Heart left ventricle (tissue), 16 donors: ENCODE measurements at regions of chr15 and their contacts with region 1.

Region 1: GRCh38 chr15:70770863-70771262 is 7.5 kb upstream of the UACA start:
- DNase-seq: no peak
- ATAC-seq: no peak
- H3K4me3 ChIP-seq: no peak overlapping the region
- H3K27ac ChIP-seq: peak overlapping the region in 1 of 12 donors; percentile 25
- H3K4me1 ChIP-seq: peaks cover 0 to 31% (median 6%) of the 10 kb centered on the region in 12 donors
- H3K27me3 ChIP-seq: no peaks in the 10 kb centered on the region
- CTCF ChIP-seq: no peak
- POLR2A ChIP-seq: no peak

Region 2: DNA sequence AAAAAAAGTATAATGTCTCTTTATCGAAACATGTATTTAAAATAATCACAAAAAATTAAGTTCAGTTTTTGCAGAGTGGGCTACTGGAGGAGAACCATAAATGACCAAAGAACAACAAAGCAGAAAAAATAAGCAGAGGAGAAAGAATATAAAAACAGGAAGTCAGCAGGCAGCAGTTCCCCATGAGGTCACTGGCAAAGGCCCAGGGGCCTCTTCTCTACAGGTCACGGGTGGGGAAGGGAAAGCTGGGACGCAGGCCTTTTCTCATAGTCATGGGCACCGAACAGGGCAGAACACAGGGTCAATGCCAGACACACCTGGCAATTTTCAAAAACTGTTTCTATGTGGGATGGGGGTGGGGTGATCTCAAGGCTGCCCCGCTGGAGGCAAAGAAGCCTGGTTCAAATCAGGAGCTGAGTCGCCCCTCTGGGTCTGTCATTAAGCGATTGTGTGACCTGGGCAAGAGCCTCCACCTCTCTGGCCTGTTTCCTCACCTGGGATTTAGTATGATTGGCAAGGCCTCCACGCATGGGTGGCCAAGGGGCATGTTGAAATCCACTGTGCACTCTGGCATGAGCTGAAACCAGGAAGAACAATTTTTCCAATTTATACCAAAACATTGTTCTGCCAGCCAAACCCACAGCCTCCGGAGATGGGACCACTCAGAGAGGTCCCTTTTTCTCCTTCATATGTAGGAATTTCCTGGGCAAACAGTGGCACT is 36.3 kb after region 1 on chr15:
- intact Hi-C with region 1: loop called in 3 of 10 experiments (anchors 5 kb)
- DNase-seq: peak; percentile 58 to 80 (median 67)
- ATAC-seq: peak; percentile 7 to 73 (median 46)
- H3K4me3 ChIP-seq: no peak overlapping the region
- H3K27ac ChIP-seq: peak overlapping the region in 8 of 12 donors; percentile 7 to 72 (median 48)
- H3K4me1 ChIP-seq: peaks cover 0 to 45% (median 10%) of the 10 kb centered on the region in 12 donors
- H3K27me3 ChIP-seq: no peaks in the 10 kb centered on the region
- CTCF ChIP-seq: no peak
- POLR2A ChIP-seq: no peak